A549 (cell line): ENCODE measurements at regions of chr1 and their contacts with region 1.

Region 1: DNA sequence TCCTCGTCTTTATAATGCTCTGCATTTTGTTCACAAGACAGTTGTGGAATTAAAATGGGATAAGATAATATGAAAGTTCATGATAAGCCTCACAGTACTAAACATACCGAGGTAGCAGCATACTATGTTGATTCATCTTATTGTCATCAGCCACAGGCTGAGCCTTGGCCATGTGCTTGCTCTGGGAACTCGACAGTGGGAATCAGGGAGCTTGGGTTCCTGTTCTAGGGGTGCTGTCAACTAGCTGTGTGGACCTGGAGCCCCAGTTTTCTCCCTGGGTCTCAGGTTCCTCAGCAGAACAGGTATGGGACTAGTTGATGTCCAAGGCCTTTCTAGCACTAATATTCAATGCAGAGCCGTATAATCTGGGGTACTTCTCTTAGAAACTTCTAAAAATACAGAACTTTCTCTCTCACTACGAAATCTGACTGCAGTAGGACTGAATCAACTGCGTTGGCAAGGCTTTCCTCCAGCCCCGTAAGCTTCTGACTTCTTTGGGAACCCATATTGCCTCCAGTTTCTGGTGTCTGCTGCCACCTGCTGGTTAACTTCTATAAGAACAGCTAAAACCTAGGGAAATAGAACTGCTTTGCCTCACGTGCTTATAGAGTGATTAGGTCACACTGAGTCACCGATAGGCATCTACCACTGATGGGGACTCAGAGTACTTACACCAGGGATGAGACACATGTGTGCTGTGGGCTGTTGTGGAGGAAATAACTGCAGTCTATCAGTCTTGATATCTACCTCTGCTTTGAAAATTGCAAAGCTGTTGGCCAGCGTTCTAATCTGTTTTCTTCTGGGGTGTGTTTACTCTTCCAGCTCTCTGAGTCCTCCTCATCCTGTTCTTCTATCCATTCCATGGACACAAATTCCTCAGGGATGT is 110.9 kb downstream of the RGL1 start:
- DNase-seq: peak; percentile 81 to 87
- ATAC-seq: peak; percentile 96 to 98
- H3K4me3 ChIP-seq: no peak overlapping the region
- H3K27ac ChIP-seq: peak overlapping the region; percentile 57 to 78; a peak in 5 of 6 replicates
- H3K4me1 ChIP-seq: peaks cover 11% of the 10 kb centered on the region; the same call in 2 of the 3 replicates
- CTCF ChIP-seq: peak; percentile 95
- EP300 ChIP-seq: no peak
- POLR2A ChIP-seq: no peak
- RAD21 ChIP-seq: peak; percentile 97 to 98

Region 2: DNA sequence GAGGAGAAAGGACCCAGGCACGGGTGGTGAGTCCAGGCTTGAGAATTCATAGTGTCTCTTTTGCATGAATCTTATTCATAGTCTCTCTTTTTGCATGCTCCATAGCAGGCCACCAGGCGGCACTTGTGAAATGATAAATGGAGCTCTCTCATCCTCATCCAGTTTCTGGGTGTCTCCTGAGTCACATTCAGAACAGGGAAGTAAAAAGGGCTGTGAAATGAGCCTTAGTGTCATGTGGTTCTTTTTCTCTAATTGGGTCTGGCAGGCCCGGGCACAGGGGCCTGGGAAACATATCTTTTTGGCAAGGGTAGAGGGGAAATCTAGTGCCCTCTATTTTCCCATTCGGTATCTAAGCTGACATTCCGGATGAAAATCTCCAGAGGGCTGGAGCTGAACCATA is 306.6 kb before region 1 on chr1:
- CTCF ChIA-PET with region 1: interaction called, 17 read pairs
- POLR2A ChIA-PET with region 1: no interaction called
- DNase-seq: peak; percentile 21 to 67
- ATAC-seq: peak; percentile 90 to 94
- H3K4me3 ChIP-seq: no peak overlapping the region
- H3K27ac ChIP-seq: peak overlapping the region; percentile 67 to 69; a peak in 5 of 6 replicates
- H3K4me1 ChIP-seq: peaks cover 31% of the 10 kb centered on the region
- CTCF ChIP-seq: peak; percentile 58
- EP300 ChIP-seq: no peak
- POLR2A ChIP-seq: no peak
- RAD21 ChIP-seq: peak; percentile 56 to 59

Region 3: GRCh38 chr1:183646776-183647175 is 269.1 kb before region 1 on chr1:
- CTCF ChIA-PET with region 1: interaction called, 142 read pairs
- POLR2A ChIA-PET with region 1: no interaction called
- DNase-seq: no peak
- ATAC-seq: no peak
- H3K4me3 ChIP-seq: no peak overlapping the region
- H3K27ac ChIP-seq: no peak overlapping the region
- H3K4me1 ChIP-seq: no peaks in the 10 kb centered on the region
- CTCF ChIP-seq: no peak
- EP300 ChIP-seq: no peak
- POLR2A ChIP-seq: no peak
- RAD21 ChIP-seq: no peak

Region 4: DNA sequence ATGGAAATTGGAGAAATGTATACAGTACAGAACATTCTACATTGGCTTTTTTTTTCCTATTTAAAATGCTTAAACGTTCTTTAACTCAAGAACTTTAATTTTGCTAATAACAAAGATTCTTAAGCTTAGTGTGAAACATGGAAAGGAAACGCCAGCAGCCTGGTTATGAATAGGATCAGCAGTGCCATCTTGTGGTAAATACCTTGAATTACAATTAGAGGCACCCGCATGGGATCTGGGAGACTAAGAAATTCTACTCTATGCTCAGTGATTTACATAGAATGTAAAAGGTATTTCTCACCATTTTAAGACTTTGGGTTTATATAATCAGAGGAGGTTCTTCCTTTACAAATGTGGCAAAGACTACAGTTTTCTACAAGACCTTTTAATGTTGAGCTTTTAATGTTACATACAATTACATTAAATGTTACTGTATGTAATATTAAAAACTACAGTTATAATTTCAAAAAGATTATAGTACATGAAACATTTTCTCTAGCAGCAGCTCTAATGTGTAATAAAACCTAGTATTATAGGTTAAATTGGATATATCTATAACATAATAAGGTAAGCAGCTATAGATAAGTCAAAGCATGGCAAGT is 230.7 kb before region 1 on chr1:
- CTCF ChIA-PET with region 1: interaction called, 24 read pairs
- POLR2A ChIA-PET with region 1: no interaction called
- DNase-seq: peak; percentile 61 to 64
- ATAC-seq: peak in 1 of 2 experiments; percentile 80; a peak in 3 of 6 replicates
- H3K4me3 ChIP-seq: no peak overlapping the region
- H3K27ac ChIP-seq: no peak overlapping the region; a peak in 1 of 6 replicates
- H3K4me1 ChIP-seq: 0 out of 3 replicates have a peak, but pooled peaks cover 5% of the 10 kb centered on the region
- CTCF ChIP-seq: peak; percentile 85
- EP300 ChIP-seq: no peak
- POLR2A ChIP-seq: no peak
- RAD21 ChIP-seq: peak; percentile 75

Region 5: GRCh38 chr1:183699616-183700160 is 216.2 kb before region 1 on chr1:
- CTCF ChIA-PET with region 1: interaction called, 15 read pairs
- POLR2A ChIA-PET with region 1: no interaction called
- DNase-seq: peak; percentile 63 to 97
- ATAC-seq: peak; percentile 95 to 97
- H3K4me3 ChIP-seq: no peak overlapping the region
- H3K27ac ChIP-seq: peak overlapping the region; percentile 86 to 89
- H3K4me1 ChIP-seq: peaks cover 33% of the 10 kb centered on the region
- CTCF ChIP-seq: no peak
- EP300 ChIP-seq: peak; percentile 93 to 94
- POLR2A ChIP-seq: no peak
- RAD21 ChIP-seq: peak; percentile 22 to 67

Region 6: DNA sequence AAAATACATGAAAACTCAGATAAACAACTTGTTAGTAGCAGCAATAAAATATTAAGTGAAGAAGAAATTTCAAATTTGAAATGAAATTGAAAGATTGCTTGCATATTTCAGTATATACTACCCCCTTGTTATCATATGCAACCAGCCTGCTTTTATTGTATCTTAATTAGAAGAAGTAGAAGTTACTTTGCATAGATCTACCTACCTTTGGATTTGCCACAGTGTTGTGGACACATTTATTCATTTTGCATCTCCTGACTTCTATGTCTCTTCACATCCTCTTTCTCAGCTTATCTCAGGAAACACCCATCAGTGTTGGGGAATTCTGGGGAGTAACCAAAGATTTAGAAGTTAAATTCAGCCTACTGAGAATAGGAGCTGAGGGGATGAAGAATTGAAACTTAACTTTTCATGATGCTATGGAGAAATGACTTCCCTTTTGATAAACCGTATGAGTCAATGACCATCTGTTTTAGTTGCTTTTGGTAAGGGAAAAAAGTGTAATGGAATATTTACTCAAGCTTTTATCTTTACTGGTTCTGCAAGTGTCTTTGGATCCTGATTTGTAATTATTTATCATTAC is 14.0 kb before region 1 on chr1:
- CTCF ChIA-PET with region 1: interaction called, 60 read pairs
- POLR2A ChIA-PET with region 1: no interaction called
- DNase-seq: no peak
- ATAC-seq: no peak
- H3K4me3 ChIP-seq: no peak overlapping the region
- H3K27ac ChIP-seq: no peak overlapping the region
- H3K4me1 ChIP-seq: no peaks in the 10 kb centered on the region
- CTCF ChIP-seq: no peak
- EP300 ChIP-seq: no peak
- POLR2A ChIP-seq: no peak
- RAD21 ChIP-seq: no peak

Region 7: GRCh38 chr1:183942933-183943693 is 27.2 kb after region 1 on chr1:
- CTCF ChIA-PET with region 1: interaction called, 15 read pairs
- POLR2A ChIA-PET with region 1: no interaction called
- DNase-seq: peak in 1 of 2 experiments; percentile 37
- ATAC-seq: peak; percentile 72; a peak in 5 of 6 replicates
- H3K4me3 ChIP-seq: no peak overlapping the region
- H3K27ac ChIP-seq: no peak overlapping the region
- H3K4me1 ChIP-seq: no peaks in the 10 kb centered on the region
- CTCF ChIP-seq: no peak
- EP300 ChIP-seq: no peak
- POLR2A ChIP-seq: no peak
- RAD21 ChIP-seq: no peak

Region 8: GRCh38 chr1:184088037-184088436 is 172.2 kb after region 1 on chr1:
- CTCF ChIA-PET with region 1: no interaction called
- POLR2A ChIA-PET with region 1: no interaction called
- DNase-seq: no peak
- ATAC-seq: no peak
- H3K4me3 ChIP-seq: no peak overlapping the region
- H3K27ac ChIP-seq: no peak overlapping the region
- H3K4me1 ChIP-seq: no peaks in the 10 kb centered on the region
- CTCF ChIP-seq: no peak
- EP300 ChIP-seq: no peak
- POLR2A ChIP-seq: no peak
- RAD21 ChIP-seq: no peak